ENCODE measurements at regions of chr1 and their contacts with region 1.

Region 1: GRCh38 chr1:85027242-85027983 is 20.9 kb downstream of the MCOLN3 start:
- DNase-seq: peak; percentile 54
- ATAC-seq: peak; percentile 90
- H3K4me3 Mint-ChIP-seq: peak overlapping the region; percentile 37
- H3K27ac Mint-ChIP-seq: peak overlapping the region; percentile 47
- H3K4me1 Mint-ChIP-seq: peaks cover 11% of the 10 kb centered on the region
- H3K27me3 Mint-ChIP-seq: no peaks in the 10 kb centered on the region

Region 2: DNA sequence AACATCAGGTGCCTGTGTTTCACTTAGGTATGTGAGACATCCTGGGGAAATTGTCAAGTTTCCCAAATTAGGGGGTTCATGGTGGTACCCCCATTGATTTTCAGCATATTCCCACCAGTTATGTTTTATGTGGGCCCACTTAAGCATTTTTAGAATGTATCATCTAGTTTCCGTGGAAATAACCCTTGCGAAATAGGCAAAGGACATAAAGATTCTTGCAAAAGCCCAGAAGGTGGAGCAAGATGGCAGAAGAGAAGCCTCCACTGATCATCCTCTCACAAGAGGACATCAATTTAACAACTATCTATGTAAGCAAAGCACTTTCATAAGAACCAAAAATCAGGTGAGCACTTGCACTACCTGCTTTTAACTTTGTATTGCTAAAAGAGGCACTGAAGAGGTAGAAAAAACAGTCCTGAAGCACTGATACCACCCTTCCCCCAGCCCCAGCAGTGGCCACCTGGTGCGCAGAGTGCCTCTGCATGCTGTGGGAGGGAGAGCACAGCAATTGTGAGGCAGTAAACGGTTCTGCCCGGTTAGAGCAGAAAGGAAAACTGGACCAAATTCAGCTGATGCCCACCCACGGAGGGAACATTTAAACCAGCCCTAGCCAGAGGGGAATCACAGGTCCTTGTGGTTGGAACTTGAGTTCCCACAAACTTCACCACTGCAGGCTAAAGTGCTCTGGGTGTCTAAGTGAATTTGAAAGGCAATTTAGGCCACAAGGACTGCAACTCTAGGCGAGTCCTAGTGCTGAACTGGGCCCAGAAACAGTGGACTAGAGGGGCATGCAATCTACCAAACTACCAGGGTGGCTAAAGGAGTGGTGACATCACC is 53.7 kb before region 1 on chr1:
- CTCF ChIA-PET with region 1: interaction called, 17 read pairs
- DNase-seq: peak; percentile 51
- ATAC-seq: peak; percentile 18
- H3K4me3 Mint-ChIP-seq: no peak overlapping the region
- H3K27ac Mint-ChIP-seq: peak overlapping the region; percentile 97
- H3K4me1 Mint-ChIP-seq: peaks cover 70% of the 10 kb centered on the region
- H3K27me3 Mint-ChIP-seq: no peaks in the 10 kb centered on the region

Region 3: DNA sequence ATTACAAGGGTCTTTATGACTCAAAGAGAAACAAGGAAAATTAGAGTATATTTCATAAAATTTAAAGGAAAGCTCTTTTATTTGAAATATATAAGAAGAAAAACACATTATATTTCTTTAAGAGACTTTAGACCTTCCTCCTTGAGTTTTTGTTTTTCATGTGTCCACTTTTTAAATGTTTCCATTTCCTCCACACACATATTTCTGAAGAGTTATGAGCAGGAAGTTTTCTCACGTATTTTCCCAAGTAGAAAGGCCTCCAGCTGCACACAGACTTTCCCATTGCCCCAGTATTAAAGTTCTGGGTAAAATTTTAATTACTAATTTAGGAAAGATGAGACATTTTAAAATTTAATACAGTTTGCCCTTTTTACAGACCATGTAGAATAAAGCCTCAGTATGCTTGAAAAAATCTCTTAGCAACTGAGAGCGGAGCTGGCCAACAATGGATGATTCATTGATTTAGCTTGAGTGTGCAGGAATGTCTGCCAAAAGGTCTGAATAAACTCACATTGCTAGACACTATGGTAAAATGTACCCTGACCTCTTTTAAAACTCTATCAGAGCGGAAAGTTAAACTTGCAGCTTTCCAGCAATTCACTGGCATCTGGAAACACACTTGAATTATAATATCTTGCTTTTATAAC is 379.6 kb after region 1 on chr1:
- CTCF ChIA-PET with region 1: no interaction called
- DNase-seq: no peak
- ATAC-seq: no peak
- H3K4me3 Mint-ChIP-seq: no peak overlapping the region
- H3K27ac Mint-ChIP-seq: no peak overlapping the region
- H3K4me1 Mint-ChIP-seq: no peaks in the 10 kb centered on the region
- H3K27me3 Mint-ChIP-seq: no peaks in the 10 kb centered on the region